SK-N-SH (cell line): ENCODE measurements at regions of chr19 and their contacts with region 1.

Region 1: DNA sequence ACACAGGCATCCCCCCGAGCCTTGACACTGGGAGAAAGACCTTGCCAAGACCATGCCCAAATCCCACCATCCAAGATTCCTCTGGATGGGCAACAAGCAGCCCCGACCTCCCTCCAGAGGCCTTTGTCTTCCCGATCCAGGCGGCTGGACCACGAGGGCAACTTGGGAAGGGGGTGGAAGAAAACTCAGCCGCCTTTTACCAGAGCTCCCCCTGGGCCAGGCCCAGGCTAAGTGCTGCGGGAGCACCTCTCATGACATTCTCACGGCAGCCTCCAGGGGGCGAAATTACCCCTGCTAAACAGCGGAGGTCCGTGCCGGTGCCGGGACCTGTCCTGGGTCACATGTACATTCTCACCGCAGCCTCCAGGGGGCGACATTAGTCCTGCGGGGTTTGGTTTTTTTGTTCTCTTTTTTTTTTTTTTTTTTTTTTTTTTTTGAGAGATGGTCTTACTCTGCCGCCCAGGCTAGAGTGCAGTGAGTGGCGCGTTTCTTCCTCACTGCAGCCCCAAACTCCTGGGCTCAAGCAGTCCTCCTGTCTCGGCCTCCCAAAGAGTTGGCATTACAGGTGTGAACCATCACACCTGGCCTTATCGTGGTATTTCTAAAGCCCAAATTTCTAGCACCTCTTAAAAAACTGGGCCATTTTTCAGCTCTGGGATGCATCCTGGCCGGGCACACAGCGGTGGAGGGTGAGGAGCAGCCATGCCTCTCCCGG is 2.1 kb upstream of the RSPH6A start:
- DNase-seq: peak; percentile 99
- H3K4me3 ChIP-seq: peak overlapping the region in 1 of 2 experiments; percentile 58; a peak in 1 of 4 replicates
- H3K27ac ChIP-seq: no peak overlapping the region; a peak in 1 of 4 replicates
- H3K4me1 ChIP-seq: peaks cover 0 to 9% of the 10 kb centered on the region in 2 experiments; a peak in 1 of 4 replicates
- H3K27me3 ChIP-seq: no peaks in the 10 kb centered on the region
- CTCF ChIP-seq: peak; percentile 99
- EP300 ChIP-seq: no peak
- RAD21 ChIP-seq: peak; percentile 82

Region 2: DNA sequence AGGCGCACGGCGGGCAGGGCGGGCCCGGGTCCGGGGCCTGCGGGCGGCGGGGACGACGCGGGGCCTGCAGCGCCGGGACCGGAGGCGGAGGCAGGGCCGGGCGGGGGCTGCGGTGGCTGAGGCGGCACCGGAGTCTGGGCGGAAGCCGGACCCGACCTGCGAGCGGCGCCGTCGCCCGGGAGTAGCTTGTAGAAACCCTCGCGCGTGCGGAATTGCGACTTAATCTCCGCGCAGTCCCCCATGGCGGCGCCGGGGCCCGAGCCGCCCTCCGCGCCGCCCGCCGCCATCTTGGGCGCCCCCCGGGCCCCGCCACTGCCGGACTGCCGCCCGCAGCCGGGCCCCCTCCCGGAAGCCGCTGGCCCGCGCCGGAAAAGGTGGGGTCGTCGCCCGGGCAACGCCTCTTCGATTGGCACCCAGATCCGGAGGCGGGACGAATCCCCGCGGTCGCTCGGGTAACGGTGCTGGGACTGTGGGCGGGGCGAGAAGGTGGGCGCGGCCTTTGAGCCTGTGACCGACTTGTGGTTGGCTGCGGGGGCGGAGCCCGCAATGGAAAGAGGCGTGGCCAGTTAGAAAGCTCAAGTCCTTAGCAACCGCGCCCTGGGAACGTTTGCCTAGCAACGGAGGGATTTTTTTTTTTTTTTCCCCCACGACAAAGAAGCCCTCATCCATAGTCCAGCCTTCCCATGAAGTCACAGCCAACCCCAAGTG is 24.5 kb before region 1 on chr19 and contains the start of gene DMWD:
- CTCF ChIA-PET with region 1: interaction called, 13 read pairs
- POLR2A ChIA-PET with region 1: no interaction called
- DNase-seq: peak; percentile 99
- H3K4me3 ChIP-seq: peak within 1 kb of the TSS; percentile 68 to 74
- H3K27ac ChIP-seq: peak within 1 kb of the TSS; percentile 55 to 76; a peak in 3 of 4 replicates
- H3K4me1 ChIP-seq: peaks cover 0 to 18% of the 10 kb centered on the region in 2 experiments; a peak in 1 of 4 replicates
- H3K27me3 ChIP-seq: no peaks in the 10 kb centered on the region
- CTCF ChIP-seq: no peak
- EP300 ChIP-seq: no peak
- RAD21 ChIP-seq: no peak
- polyA plus RNA-seq, gene DMWD: 39.3 and 40.6 TPM in 2 replicates

Region 3: GRCh38 chr19:45804140-45804958 is 12.8 kb before region 1 on chr19:
- CTCF ChIA-PET with region 1: interaction called, 61 read pairs
- POLR2A ChIA-PET with region 1: interaction called, 6 read pairs
- DNase-seq: no peak
- H3K4me3 ChIP-seq: no peak overlapping the region
- H3K27ac ChIP-seq: no peak overlapping the region
- H3K4me1 ChIP-seq: peaks cover 0 to 3% of the 10 kb centered on the region in 2 experiments; a peak in 2 of 4 replicates
- H3K27me3 ChIP-seq: no peaks in the 10 kb centered on the region
- CTCF ChIP-seq: no peak
- EP300 ChIP-seq: no peak
- RAD21 ChIP-seq: no peak

Region 4: DNA sequence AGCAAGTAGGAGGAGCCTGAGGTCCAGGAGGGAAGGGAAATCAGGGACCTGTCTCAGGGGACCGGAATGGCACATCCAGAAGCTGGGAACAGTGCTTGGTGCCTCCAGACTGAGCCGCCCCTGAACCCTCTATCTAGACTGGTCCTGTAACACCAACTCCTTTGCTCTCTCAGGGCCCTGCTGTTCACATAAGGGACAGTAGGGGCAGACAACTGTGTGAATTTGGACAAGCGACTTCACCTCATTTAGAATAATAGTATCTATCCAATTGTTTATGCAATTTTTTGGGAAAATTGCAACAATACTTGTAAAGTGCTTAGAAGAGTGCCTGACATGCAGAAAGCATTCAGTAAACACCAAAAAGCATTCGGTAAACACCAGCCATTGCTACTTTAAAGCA is 31.8 kb after region 1 on chr19:
- CTCF ChIA-PET with region 1: interaction called, 35 read pairs
- POLR2A ChIA-PET with region 1: no interaction called
- DNase-seq: no peak
- H3K4me3 ChIP-seq: no peak overlapping the region
- H3K27ac ChIP-seq: no peak overlapping the region
- H3K4me1 ChIP-seq: no peaks in the 10 kb centered on the region
- H3K27me3 ChIP-seq: no peaks in the 10 kb centered on the region
- CTCF ChIP-seq: peak; percentile 41
- EP300 ChIP-seq: no peak
- RAD21 ChIP-seq: no peak

Region 5: DNA sequence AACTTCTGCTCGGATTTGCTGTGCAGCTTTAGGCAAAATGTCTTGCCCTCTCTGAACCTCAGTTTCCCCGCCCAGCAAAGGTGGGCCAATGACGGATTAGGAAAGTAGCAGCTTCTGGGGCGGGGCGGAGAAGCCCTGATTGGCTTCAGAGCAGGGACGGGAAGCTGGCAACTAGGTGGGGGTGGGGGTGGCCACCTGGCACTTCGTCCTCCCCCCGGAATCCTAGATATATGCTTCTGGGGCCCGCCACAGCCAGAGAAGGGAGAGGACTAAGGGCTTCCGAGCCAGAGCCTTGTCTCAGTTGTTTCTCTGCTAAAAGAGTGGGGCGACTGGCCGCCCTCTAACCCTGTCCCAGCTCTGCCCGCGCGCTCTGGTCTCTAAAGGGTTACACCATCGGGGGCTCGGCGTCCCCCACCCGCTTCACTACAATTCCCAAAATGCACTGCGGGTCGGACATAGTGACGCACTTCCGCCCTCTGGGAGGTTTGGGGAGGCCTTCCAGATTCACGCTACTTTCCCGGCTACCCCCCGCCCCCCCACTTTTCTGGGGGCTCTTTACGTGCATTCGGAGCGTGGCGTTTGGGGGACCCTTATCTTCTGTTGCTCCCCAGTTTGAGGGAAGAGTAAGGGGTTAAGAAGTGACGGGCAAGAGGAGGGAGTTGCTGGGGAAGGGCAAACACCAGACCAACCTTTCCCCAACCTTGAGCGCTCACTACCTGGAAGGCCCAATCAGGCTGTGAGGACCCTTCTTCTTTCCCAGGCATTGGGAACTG is 69.4 kb after region 1 on chr19:
- CTCF ChIA-PET with region 1: interaction called, 130 read pairs
- POLR2A ChIA-PET with region 1: interaction called, 3 read pairs
- DNase-seq: peak; percentile 94
- H3K4me3 ChIP-seq: peak overlapping the region; percentile 72 to 81
- H3K27ac ChIP-seq: peak overlapping the region; percentile 78 to 92
- H3K4me1 ChIP-seq: peaks cover 3 to 39% of the 10 kb centered on the region in 2 experiments; a peak in 2 of 4 replicates
- H3K27me3 ChIP-seq: no peaks in the 10 kb centered on the region
- CTCF ChIP-seq: no peak
- EP300 ChIP-seq: no peak
- RAD21 ChIP-seq: no peak